ENCODE measurements at regions of chr7 and their contacts with region 1.

Region 1: DNA sequence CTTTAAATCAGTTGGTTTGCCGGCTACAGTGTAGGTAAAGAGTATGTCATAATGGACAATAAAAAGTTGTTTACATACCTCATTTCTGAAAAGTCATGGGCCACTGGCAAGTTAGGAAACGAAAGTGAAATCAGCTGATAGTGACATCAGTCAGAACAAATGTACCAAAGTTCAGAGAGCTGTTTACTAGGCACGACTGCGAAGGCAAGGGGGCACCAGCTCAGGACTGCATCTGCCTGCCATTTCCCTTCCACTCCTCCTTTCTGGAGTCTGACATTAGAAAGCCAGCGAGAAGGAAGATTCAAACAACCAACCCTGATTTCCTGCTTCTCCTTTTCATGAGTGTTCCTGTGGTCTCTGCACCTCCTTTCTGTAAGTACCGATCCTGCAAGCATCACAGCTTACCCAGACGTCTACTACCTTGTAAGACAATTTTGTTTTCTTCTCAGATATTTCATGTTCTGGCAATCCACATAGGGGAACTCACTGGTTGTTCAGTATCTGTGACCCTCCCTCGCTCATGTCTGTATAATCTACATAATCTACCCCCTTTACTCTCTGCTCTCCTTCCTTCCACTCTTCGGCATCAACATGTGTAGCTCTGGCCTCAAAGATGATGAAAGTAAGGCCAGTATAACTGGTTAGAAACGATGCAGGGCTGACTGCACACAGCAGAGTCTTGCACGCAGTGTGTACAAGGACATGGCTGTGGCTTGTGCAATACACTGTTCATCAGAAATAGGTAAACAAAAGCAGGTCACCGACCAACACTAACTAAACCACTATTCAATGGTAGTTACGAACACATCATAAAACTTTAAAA is at the start of gene TMEM140:
- DNase-seq: peak; percentile 33
- H3K4me3 Mint-ChIP-seq: peak within 1 kb of the TSS; percentile 39
- H3K27ac Mint-ChIP-seq: peak within 1 kb of the TSS; percentile 46
- H3K4me1 Mint-ChIP-seq: peaks cover 7% of the 10 kb centered on the region
- H3K27me3 Mint-ChIP-seq: no peaks in the 10 kb centered on the region
- CTCF ChIP-seq: no peak
- total RNA-seq, gene TMEM140: not detected in 2 replicates

Region 2: GRCh38 chr7:135170274-135170997 is 22.3 kb after region 1 on chr7 and contains the start of gene CYREN:
- CTCF ChIA-PET with region 1: interaction called, 8 read pairs
- POLR2A ChIA-PET with region 1: interaction called, 32 read pairs
- intact Hi-C with region 1: no loop called
- DNase-seq: peak; percentile 95
- H3K4me3 Mint-ChIP-seq: peak within 1 kb of the TSS; percentile 79
- H3K27ac Mint-ChIP-seq: peak within 1 kb of the TSS; percentile 88
- H3K4me1 Mint-ChIP-seq: peaks cover 34% of the 10 kb centered on the region
- H3K27me3 Mint-ChIP-seq: no peaks in the 10 kb centered on the region
- CTCF ChIP-seq: peak; percentile 44
- total RNA-seq, gene CYREN: 66.0 and 71.0 TPM in 2 replicates

Region 3: DNA sequence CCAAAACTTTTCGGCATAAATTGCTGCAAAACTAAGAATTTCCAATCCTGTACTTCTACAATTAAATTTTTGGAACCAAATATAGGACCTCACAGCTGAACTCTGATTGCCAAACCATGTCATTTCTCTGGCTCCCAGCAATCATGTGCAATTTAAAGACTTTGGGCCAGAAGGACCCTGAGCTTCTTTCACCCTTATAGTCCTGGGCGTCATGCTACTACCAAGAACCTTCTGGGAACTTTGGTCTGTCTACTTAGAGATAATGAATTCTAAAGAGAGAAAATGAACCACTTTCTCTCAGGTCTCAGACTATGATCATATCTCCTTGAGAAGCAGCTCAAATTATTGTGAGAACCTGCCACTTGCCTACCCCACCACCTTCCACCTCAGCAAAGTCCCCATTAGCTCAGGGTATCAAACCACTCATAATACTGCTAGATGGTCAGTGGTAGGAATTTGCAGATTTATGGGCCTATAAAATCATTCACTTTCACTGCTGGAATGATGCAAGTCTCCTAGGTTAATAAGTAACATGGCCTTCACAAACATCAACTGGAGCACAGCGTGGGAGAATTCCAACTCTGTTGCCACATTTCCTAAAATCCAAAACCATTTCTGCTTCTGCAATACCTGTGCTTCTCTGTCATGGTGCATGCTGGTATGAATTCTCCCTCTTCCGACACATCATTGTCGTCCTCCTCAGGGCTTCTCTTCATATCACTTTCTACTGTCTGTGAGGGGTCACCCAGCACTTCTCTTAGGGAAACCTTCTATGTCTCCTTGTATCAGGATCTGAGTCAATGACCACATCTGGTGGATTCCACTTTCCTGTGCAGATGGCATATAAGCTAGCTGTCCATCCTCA is 69.8 kb after region 1 on chr7:
- CTCF ChIA-PET with region 1: no interaction called
- POLR2A ChIA-PET with region 1: no interaction called
- intact Hi-C with region 1: loop called (anchors 2 kb)
- DNase-seq: no peak
- H3K4me3 Mint-ChIP-seq: no peak overlapping the region
- H3K27ac Mint-ChIP-seq: no peak overlapping the region
- H3K4me1 Mint-ChIP-seq: no peaks in the 10 kb centered on the region
- H3K27me3 Mint-ChIP-seq: no peaks in the 10 kb centered on the region
- CTCF ChIP-seq: no peak

Region 4: DNA sequence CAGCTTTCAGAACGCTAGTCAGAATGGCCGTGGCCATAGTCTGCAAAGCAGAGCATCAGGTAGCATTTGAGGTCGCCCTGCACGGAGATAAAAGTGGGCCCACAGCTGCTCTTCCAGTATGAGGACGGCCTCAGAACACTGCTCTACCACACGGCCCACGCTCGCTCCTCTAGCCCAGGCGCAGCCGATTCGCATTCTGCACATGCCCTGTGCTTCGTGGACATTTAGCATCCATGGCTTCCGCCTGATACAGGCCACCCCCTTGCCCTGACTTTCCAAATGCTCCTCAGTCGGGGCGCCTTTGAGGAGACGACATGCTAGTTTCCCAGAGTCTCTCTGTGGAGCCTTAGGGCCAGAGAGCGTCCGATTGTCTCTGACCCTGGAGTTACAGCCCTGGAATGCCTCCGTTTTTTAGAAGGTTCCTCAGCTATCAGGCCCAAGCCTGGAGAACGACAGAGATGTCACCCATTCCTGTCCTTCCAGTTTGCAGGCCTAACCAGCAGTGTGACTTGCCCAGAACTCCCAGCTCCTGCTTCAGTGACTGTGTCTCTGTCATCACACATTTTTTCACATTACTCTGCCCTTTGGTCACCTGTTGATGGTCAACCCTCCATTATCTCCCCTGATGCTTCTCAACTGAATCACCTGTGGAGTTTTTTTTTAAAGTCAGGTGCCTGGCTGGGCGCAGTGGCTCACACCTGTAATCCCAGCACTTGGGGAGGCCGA is 99.8 kb after region 1 on chr7:
- CTCF ChIA-PET with region 1: no interaction called
- POLR2A ChIA-PET with region 1: no interaction called
- intact Hi-C with region 1: no loop called
- DNase-seq: no peak
- H3K4me3 Mint-ChIP-seq: no peak overlapping the region
- H3K27ac Mint-ChIP-seq: no peak overlapping the region
- H3K4me1 Mint-ChIP-seq: no peaks in the 10 kb centered on the region
- H3K27me3 Mint-ChIP-seq: peaks cover 17% of the 10 kb centered on the region
- CTCF ChIP-seq: no peak

Measured in MCF 10A (cell line).